Esophagus squamous epithelium (tissue), 5 donors: ENCODE measurements at regions of chr4 and their contacts with region 1.

Region 1: DNA sequence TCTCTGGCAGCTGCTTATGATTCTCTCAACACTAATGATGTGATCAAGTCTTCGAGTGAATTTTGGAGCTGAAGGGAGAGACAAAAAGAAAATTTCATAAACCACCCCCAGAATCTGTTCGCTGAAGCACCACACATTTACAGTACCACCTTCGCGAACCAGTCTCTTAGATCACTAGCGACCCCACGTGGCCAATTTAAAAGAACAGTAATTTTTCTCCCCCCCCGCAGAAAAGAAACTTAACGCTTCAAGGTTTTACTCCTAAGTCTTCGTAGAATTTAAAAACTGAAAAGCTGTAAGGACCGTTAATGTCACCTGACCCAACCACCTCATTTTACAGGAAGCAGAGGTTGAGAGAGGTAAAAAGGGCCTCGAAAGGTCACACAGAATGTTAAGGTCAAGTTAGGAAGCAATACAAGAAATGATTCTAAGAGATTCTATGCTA is 187.5 kb downstream of the QDPR start:
- DNase-seq: no peak
- H3K4me3 ChIP-seq: peak overlapping the region in 1 of 4 donors; percentile 12
- H3K27ac ChIP-seq: peak overlapping the region in 1 of 4 donors; percentile 30
- H3K4me1 ChIP-seq: peaks cover 3 to 32% (median 15%) of the 10 kb centered on the region in 3 donors
- H3K27me3 ChIP-seq: no peaks in the 10 kb centered on the region
- CTCF ChIP-seq: peak; percentile 21 to 72 (median 62)
- POLR2A ChIP-seq: no peak

Region 2: GRCh38 chr4:16916719-16917337 is 407.6 kb before region 1 on chr4:
- intact Hi-C with region 1: loop called (anchors 10 kb)
- DNase-seq: no peak
- H3K4me3 ChIP-seq: no peak overlapping the region
- H3K27ac ChIP-seq: no peak overlapping the region
- H3K4me1 ChIP-seq: no peaks in the 10 kb centered on the region
- H3K27me3 ChIP-seq: no peaks in the 10 kb centered on the region
- CTCF ChIP-seq: peak; percentile 13 to 96 (median 74)
- POLR2A ChIP-seq: no peak